Aorta (tissue), 5 donors: ENCODE measurements at regions of chr3 and their contacts with region 1.

Region 1: GRCh38 chr3:20246662-20247061 is 60.7 kb upstream of the SGO1 start:
- DNase-seq: no peak
- ATAC-seq: no peak
- H3K4me3 ChIP-seq: no peak overlapping the region
- H3K27ac ChIP-seq: no peak overlapping the region
- H3K4me1 ChIP-seq: no peaks in the 10 kb centered on the region
- H3K27me3 ChIP-seq: no peaks in the 10 kb centered on the region

Region 2: DNA sequence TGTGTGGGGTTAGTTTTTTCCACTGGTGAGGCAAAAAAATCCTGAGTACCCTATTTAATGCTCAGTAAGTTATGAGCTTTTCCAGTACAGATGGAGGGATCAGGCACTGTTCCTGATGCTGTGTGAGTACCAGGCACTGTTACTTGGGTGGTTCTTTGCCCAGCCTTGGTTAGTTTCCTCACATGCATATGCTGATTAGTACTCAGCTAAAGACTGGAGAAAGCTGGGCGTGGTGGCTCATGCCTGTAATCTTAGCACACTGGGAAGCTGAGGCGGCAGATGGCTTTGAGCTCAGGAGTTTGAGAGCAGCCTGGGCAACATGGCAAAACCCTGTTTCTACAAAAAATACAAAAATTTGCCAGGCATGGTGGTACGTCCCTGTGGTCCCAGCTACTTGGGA is 149.7 kb after region 1 on chr3:
- intact Hi-C with region 1: loop called in 1 of 2 experiments (anchors 10 kb)
- DNase-seq: no peak
- ATAC-seq: no peak
- H3K4me3 ChIP-seq: no peak overlapping the region
- H3K27ac ChIP-seq: no peak overlapping the region
- H3K4me1 ChIP-seq: no peaks in the 10 kb centered on the region
- H3K27me3 ChIP-seq: no peaks in the 10 kb centered on the region